Right ventricle myocardium superior (tissue), 1 donor: ENCODE measurements at regions of chr5 and their contacts with region 1.

Region 1: DNA sequence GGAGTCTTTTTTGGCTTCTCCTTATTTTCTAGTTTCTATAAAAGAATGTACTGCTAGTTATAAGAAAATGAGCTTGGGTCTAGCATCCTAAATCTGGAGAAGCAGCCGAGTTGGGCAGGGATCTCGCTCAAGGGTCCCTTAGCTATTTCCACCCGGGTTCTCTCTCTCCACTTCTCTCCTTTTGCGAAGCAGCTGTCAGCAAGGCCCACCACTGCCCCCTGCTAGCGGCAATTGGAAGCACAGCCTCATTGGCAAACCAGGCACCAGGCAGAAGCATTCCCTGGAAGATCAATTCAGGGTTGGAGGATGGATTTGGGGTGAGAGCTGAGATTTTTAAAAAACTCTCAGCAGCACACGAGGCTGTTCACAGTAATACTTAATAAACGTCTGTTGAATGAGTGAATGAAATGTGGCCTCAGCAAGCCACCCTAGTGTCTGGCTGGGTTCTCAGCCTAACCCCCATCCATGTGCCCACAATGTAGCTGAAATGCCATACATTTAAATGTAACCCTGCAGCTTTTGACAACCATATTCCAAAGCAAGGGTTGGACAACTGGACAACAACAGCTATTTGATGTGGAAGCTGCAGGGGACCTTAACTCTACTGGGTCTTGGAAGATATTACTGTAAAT is 34.6 kb upstream of the TNIP1 start:
- DNase-seq: peak; percentile 89
- ATAC-seq: peak; percentile 80

Region 2: DNA sequence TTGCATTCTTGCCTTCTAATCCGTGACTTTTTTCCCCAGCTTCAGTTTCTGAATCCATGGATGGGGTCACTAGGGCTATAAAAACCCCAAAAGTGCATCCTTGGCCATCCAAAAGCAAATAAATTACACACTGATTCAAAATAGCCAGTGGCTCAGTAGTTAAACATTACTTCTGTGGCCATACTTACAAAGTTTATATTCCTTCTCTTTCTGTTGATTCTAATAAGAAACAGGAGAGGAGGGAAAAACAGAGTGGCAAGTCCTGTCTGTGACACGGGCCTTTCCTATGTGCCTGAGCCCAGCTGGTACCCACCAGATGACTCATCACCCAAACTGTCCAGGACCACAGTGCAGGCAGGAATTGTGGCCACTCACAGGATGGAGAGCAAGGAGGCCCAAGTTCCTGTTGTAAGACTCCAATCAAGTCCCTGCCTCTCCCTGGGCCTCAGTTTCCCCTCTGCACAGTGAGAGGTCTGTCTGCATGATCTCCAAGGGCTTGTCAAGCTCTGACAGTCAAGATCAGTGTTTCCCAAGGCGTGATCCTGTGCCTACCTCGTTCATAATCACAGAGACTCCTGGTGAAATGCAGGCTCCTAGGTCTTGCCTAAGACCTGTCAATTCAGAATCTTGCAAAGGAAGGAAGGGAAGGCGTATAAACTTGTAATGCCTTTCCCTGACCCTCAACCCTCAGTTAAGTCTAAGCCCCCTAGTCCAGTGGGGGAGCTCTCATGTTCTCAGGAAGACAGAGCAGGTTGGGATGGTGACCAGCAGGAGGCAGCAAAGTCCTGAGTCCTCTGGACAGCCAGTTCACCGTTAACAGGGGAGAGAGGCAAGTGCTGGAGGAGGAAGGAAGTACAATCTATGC is 64.1 kb before region 1 on chr5:
- intact Hi-C with region 1: loop called (anchors 1 kb)
- DNase-seq: peak; percentile 89
- ATAC-seq: peak; percentile 85